Naive thymus-derived CD4-positive, alpha-beta T cell (primary cell): ENCODE measurements at regions of chr12 and their contacts with region 1.

Region 1: DNA sequence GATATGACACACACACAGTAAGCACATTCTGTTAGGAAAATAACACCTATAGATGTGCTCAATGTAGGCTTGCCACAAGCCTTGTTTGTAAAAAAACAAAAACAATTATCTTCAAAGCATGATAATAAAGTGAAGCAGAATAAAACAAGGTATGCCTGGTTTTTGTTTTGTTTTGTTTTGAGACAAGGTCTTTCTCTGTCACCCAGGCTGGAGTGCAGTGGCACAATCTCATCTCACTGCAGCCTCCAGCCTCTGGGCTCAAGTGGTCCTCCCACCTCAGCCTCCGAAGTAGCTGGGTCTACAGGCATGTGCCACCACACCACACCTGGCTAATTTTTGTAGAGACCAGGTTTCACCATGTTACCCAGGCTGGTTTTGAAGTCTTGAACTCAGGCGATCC is 52.4 kb upstream of the MON2 start:
- DNase-seq: no peak
- ATAC-seq: no peak
- H3K4me3 ChIP-seq: no peak overlapping the region
- H3K4me3 Mint-ChIP-seq: no peak overlapping the region
- H3K27ac ChIP-seq: no peak overlapping the region
- H3K27ac Mint-ChIP-seq: peak overlapping the region in 5 of 9 donors; percentile 19 to 68 (median 45)
- H3K4me1 ChIP-seq: no peaks in the 10 kb centered on the region
- H3K4me1 Mint-ChIP-seq: peaks cover 0 to 17% (median 4%) of the 10 kb centered on the region in 7 donors
- H3K27me3 ChIP-seq: no peaks in the 10 kb centered on the region
- H3K27me3 Mint-ChIP-seq: no peaks in the 10 kb centered on the region

Region 2: DNA sequence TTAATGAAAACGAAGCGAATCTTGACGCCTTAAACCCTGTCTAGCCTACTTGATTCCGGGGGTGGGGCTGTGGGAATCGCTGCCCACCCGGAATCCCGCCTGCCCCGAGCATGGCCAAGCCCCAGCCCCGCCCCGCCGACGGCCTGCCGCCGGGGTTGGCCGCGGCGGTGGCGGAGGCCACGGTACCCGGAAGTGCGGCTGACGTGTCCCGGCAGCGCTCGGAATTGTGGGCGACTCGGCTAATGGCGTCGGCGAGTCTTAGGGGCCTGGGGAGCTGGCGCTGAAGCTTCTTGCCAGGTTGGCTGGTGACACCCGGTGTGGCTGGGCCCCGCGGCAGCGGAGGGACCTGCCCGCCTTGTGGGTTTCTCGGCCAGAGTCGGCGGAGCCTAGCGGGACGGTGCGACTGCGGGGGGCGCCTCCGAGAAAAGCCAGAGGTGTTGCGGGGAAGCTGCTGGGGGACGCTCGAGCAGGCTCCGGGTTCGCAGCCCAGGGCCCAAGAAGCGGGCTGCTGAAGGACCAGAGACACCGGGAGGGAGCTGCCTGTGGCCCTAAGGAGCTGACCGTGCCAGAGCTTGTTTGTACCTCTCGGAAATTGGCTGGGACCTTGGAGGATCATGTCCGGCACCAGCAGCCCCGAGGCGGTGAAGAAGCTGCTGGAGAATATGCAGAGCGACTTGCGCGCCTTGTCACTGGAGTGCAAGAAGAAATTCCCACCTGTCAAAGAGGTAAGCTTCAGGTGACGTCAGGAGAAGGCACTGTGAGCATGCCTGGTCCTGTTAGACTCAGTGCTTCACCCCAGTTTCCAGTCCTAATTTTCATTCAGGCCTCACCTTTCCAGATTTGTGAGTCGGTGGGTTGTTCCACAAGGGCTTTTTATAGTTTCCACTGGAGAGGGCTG is 52.7 kb after region 1 on chr12 and contains the start of gene MON2:
- CTCF ChIA-PET with region 1: no interaction called
- POLR2A ChIA-PET with region 1: no interaction called
- intact Hi-C with region 1: loop called in 1 of 2 experiments (anchors 1 kb)
- DNase-seq: peak; percentile 79 to 89 (median 84)
- ATAC-seq: peak; percentile 98
- H3K4me3 ChIP-seq: peak within 1 kb of the TSS; percentile 90
- H3K4me3 Mint-ChIP-seq: peak within 1 kb of the TSS; percentile 85 to 99 (median 94)
- H3K27ac ChIP-seq: peak within 1 kb of the TSS; percentile 88
- H3K27ac Mint-ChIP-seq: peak within 1 kb of the TSS; percentile 86 to 98 (median 96)
- H3K4me1 ChIP-seq: peaks cover 8 to 17% of the 10 kb centered on the region in 2 donors
- H3K4me1 Mint-ChIP-seq: peaks cover 12 to 30% (median 21%) of the 10 kb centered on the region in 7 donors
- H3K27me3 ChIP-seq: peaks cover 0 to 4% of the 10 kb centered on the region in 2 donors
- H3K27me3 Mint-ChIP-seq: peaks cover 0 to 4% (median 3%) of the 10 kb centered on the region in 5 donors
- total RNA-seq, gene MON2: 50.0 to 96.3 (median 76.0) TPM